ENCODE measurements at regions of chr1 and their contacts with region 1.

Region 1: GRCh38 chr1:235128456-235129328 is at the start of gene TOMM20:
- DNase-seq: peak; percentile 97
- ATAC-seq: peak; percentile 97
- H3K4me3 Mint-ChIP-seq: peak within 1 kb of the TSS; percentile 99
- H3K27ac Mint-ChIP-seq: peak within 1 kb of the TSS; percentile 98
- H3K4me1 Mint-ChIP-seq: peaks cover 35% of the 10 kb centered on the region
- H3K27me3 Mint-ChIP-seq: no peaks in the 10 kb centered on the region
- CTCF ChIP-seq: no peak
- total RNA-seq, gene TOMM20: 155 to 159 TPM

Region 2: DNA sequence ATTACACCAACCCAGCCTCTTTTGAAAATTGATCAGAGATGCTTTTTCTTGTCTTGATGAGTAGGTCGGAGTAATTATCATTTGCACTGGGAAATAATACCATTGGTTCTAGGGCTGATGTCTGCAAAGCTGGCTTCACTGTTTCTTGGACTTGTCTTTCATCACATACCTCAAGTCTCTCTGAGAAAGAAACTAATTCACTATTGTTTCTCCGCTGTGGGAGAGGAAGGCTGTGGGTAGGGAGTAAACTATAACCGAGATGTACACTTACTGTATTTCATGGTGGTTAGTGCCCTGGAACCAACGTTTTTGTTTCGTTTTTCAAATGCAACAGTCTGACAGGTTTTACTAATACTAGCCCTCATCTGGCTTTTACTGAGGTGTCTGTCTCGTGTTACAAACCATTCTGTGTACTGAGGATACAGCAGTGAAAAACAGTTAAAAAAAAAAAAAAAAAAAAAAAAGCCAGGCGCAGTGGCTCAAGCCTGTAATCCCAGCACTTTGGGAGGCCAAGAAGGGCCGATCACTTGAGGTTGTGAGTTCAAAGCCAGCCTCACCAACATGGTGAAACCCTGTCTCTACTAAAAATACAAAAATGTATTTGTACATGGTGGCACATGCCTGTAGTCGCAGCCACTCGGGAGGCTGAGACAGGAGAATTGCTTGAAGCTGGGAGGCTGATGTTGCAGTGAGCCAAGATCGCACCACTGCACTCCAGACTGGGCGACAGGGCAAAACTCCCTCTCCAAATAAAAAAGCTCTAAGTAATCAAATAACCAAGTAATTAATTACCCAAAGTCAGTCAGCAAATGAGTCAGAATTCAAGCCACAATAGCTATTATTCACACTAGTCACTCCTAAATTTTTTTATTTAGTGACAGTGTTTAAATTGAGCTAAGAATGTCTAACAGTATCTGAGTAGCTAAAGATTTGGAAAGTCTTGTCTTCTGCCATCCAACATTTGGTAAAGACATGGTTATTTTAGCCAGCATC is 23.3 kb before region 1 on chr1:
- CTCF ChIA-PET with region 1: interaction called, 11 read pairs
- POLR2A ChIA-PET with region 1: interaction called, 10 read pairs
- intact Hi-C with region 1: no loop called
- DNase-seq: no peak
- ATAC-seq: peak; percentile 66
- H3K4me3 Mint-ChIP-seq: peak overlapping the region; percentile 61
- H3K27ac Mint-ChIP-seq: peak overlapping the region; percentile 79
- H3K4me1 Mint-ChIP-seq: peaks cover 42% of the 10 kb centered on the region
- H3K27me3 Mint-ChIP-seq: peaks cover 3% of the 10 kb centered on the region
- CTCF ChIP-seq: no peak

Region 3: GRCh38 chr1:235113183-235113917 is 15.3 kb before region 1 on chr1:
- CTCF ChIA-PET with region 1: interaction called, 8 read pairs
- POLR2A ChIA-PET with region 1: interaction called, 15 read pairs
- intact Hi-C with region 1: no loop called
- DNase-seq: no peak
- ATAC-seq: no peak
- H3K4me3 Mint-ChIP-seq: no peak overlapping the region
- H3K27ac Mint-ChIP-seq: peak overlapping the region; percentile 28
- H3K4me1 Mint-ChIP-seq: peaks cover 10% of the 10 kb centered on the region
- H3K27me3 Mint-ChIP-seq: no peaks in the 10 kb centered on the region
- CTCF ChIP-seq: no peak

Region 4: GRCh38 chr1:235160957-235161684 is 32.4 kb after region 1 on chr1 and contains the start of gene RBM34:
- CTCF ChIA-PET with region 1: interaction called, 4 read pairs
- POLR2A ChIA-PET with region 1: interaction called, 13 read pairs
- intact Hi-C with region 1: loop called (anchors 2 kb)
- DNase-seq: peak; percentile 94
- ATAC-seq: peak; percentile 95
- H3K4me3 Mint-ChIP-seq: peak within 1 kb of the TSS; percentile 99
- H3K27ac Mint-ChIP-seq: peak within 1 kb of the TSS; percentile 100
- H3K4me1 Mint-ChIP-seq: peaks cover 16% of the 10 kb centered on the region
- H3K27me3 Mint-ChIP-seq: no peaks in the 10 kb centered on the region
- CTCF ChIP-seq: peak; percentile 10
- total RNA-seq, gene RBM34: 136 TPM

Measured in activated CD8-positive, alpha-beta T cell treated with anti-CD3 and anti-CD28 coated beads for 36 hours (primary cell).